Vagina (tissue), 2 donors: ENCODE measurements at regions of chr19 and their contacts with region 1.

Region 1: DNA sequence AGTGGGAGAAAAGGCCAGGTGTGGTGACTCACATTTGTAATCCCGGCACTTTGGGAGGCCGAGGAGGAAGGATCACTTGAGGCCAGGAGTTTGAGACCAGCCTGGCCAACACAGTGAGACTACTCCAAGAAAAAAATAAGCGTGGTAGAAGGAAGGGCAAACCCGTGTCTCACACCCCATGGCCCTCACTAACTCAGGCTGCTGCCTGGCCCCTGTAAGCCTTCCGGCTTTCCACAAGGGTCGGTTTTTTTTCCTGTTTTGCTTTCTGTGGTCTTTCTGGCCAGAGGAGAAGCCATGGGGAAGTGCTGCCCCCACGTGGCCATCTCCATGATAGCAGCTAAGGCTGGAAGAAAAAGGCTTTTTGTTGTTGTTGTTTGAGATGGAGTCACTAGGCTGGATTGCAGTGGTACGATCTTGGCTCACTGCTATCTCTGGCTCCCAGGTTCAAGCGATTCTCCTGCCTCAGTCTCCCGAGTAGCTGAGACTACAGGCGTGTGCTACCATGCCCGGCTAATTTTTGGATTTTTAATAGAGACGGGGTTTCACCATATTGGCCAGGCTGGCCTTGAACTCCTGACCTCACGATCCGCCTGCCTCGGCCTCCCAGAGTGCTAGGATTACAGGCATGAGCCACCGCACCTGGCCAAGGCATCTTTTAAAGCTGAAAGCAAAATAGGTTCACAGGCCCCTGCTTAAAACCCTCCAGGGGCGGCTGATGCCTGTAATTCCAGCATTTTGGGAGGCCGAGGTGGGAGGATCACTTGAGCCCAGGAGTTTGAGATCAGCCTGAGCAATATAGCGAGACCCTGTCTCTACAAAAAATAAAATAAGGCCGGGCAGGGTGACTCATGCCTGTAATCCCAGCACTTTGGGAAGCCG is 7.5 kb upstream of the ARHGEF18 start:
- DNase-seq: no peak
- H3K4me3 ChIP-seq: no peak overlapping the region
- H3K27ac ChIP-seq: no peak overlapping the region
- H3K4me1 ChIP-seq: peaks cover 4% of the 10 kb centered on the region
- H3K27me3 ChIP-seq: no peaks in the 10 kb centered on the region
- CTCF ChIP-seq: peak; percentile 87 to 94 (median 94)
- POLR2A ChIP-seq: no peak

Region 2: GRCh38 chr19:7104747-7105447 is 236.3 kb before region 1 on chr19:
- intact Hi-C with region 1: loop called (anchors 5 kb)
- DNase-seq: no peak
- H3K4me3 ChIP-seq: no peak overlapping the region
- H3K27ac ChIP-seq: no peak overlapping the region
- H3K4me1 ChIP-seq: no peaks in the 10 kb centered on the region
- H3K27me3 ChIP-seq: no peaks in the 10 kb centered on the region
- CTCF ChIP-seq: no peak
- POLR2A ChIP-seq: no peak

Region 3: DNA sequence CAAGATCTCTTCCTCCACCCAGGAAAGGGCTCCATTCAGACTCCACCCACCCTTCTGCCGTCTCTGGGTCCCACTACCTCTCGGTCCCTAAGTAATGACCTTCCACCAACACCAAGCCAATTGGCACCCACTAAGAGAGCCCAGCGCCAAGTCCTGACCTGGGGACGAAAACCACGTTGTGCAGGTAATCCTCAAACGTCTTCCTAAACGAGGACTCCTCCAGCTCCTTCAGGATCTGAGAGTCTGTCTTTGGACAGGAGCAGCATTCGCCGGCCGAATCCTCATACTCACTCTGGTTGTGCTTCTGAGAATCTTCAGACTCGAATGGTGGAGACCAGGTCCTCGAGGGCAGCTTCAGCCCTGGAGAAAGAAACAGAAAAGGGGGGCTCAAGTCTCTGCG is 188.6 kb before region 1 on chr19:
- intact Hi-C with region 1: loop called (anchors 5 kb)
- DNase-seq: no peak
- H3K4me3 ChIP-seq: no peak overlapping the region
- H3K27ac ChIP-seq: no peak overlapping the region
- H3K4me1 ChIP-seq: no peaks in the 10 kb centered on the region
- H3K27me3 ChIP-seq: no peaks in the 10 kb centered on the region
- CTCF ChIP-seq: no peak
- POLR2A ChIP-seq: no peak

Region 4: DNA sequence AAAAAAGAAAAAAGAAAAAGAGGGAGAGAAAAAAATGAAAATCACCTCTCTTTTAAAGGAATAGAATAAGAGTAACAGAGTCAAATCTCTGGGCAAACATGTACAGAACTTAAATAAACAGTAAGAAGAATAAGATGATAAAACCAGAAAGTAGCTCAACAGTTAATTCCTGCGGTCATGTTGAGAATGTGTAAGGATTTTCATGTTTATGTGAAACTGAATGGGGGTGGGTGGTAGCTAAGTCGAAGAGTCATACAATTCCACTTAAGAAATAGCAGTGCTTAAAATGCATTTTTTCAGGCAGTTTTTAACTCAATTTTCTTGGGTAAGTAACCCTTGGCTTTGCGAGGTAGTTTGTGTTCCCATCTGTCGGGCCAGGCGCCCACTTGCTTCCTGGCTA is 86.7 kb after region 1 on chr19:
- intact Hi-C with region 1: no loop called
- DNase-seq: no peak
- H3K4me3 ChIP-seq: no peak overlapping the region
- H3K27ac ChIP-seq: no peak overlapping the region
- H3K4me1 ChIP-seq: peaks cover 13% of the 10 kb centered on the region
- H3K27me3 ChIP-seq: no peaks in the 10 kb centered on the region
- CTCF ChIP-seq: no peak
- POLR2A ChIP-seq: no peak